Ascending aorta (tissue), 2 donors: ENCODE measurements at regions of chr6 and their contacts with region 1.

Region 1: DNA sequence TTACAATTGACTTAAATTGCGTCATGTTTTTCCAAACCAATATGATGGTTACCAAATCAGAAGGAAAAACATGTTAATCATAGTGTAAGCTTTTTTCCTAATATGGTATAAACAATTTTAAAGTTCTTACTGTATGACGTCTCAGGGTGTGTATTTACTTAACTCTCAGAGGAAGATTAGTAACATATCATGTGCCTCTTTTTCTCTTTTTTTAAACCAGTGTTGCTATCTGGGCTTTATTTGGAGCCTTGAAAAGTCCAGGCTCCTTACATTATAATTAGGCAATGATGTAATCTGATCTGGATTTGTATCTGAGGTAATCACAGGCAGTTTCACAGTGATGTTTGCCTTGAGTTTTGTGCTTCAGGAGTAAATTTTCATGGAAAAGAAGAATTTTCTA is 20.4 kb upstream of the RAB23 start:
- DNase-seq: no peak
- H3K4me3 ChIP-seq: no peak overlapping the region
- H3K27ac ChIP-seq: peak overlapping the region; percentile 80 to 81
- H3K4me1 ChIP-seq: peaks cover 3 to 8% of the 10 kb centered on the region in 2 donors
- H3K27me3 ChIP-seq: no peaks in the 10 kb centered on the region
- CTCF ChIP-seq: no peak

Region 2: DNA sequence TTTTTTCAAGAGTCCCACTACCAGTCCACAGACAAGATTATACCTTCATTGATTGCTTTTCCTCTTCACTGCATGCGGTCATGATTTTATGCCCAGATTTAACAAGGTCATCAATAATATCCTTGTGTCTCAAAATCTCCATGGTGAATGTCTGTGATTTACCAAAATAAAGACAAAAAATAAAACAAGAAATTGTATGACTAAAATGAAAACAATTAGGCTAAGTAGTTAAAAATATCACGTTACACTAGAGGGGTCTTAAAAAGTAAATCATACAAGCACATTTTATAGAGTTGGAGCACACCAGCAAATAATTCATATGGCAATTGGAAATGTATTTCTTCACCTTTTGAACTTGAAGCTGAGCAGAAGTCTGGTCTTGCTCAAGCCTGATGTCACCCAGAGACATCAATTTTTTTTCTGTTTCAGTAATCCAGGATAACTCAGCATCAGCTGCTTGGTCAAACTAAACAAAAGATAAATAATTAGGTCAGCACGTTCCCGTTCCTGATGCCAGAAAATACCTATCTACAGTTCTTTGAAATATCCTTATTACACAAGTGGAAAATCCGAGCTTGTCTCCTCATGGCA is 725.3 kb before region 1 on chr6:
- intact Hi-C with region 1: no loop called
- DNase-seq: no peak
- H3K4me3 ChIP-seq: no peak overlapping the region
- H3K27ac ChIP-seq: peak overlapping the region; percentile 29 to 43
- H3K4me1 ChIP-seq: peaks cover 5 to 42% of the 10 kb centered on the region in 2 donors
- H3K27me3 ChIP-seq: no peaks in the 10 kb centered on the region
- CTCF ChIP-seq: no peak

Region 3: DNA sequence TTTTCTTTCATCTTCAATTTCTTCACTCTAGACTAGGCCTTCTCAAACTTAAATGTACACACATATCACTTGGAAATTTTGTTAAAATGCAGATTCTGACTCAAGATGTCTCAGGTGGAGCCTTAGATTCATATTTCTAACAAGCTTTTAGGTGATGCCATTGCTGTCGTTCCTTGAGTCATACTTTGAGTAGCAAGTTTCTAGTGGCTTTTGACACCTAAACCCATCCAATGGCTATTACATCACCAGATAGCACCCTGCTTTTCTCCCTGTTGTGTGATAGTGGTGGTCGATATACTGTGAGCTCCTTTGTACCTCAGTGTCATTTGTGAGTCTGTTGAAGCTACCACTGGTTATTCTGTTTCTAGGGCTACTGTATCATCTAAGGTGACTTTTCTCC is 105.2 kb before region 1 on chr6:
- intact Hi-C with region 1: no loop called
- DNase-seq: no peak
- H3K4me3 ChIP-seq: no peak overlapping the region
- H3K27ac ChIP-seq: no peak overlapping the region
- H3K4me1 ChIP-seq: no peaks in the 10 kb centered on the region
- H3K27me3 ChIP-seq: no peaks in the 10 kb centered on the region
- CTCF ChIP-seq: no peak

Region 4: DNA sequence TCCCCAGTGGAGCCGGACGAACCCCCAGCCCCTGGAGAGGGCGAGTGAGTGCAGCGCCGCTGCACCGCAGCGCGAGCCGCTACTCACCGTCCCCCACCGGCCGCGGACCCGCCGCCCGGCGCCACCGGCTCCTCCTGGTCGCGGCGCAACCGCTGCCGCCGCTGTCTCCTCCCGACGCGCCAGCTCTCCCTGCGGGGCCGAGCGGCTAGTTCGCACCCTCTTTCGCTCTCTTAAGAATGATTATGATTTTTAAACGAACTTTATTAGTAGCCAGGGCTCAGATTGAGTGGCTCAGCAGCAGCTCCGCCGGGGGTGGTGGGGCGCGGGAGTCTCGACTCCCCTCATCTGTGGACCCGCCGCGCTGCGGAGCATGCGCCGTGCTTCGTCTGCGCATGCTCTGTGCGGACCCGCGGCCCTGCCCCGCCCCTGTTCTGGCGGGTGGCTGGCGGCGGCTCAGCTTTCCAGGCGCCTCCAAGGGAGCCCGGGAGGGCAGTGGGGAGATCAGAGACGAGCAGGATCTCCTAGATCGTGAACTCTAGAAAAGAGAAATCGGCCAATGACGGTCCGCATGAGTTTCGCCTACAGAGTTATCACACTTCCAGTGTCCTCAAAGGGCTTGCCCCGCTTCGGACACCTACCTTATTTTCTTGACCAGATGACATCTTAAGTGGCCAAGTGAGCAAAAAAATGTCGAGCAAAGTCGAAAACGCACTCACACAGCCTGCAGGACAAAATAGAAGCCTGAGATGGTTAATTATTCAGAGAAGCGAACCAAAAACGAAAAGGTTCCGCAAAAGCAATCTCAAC is 20.4 kb before region 1 on chr6 and contains the start of gene RAB23:
- intact Hi-C with region 1: loop called (anchors 1 kb)
- DNase-seq: peak; percentile 16 to 89
- H3K4me3 ChIP-seq: peak within 1 kb of the TSS; percentile 72 to 88
- H3K27ac ChIP-seq: peak within 1 kb of the TSS; percentile 93 to 96
- H3K4me1 ChIP-seq: peaks cover 0 to 6% of the 10 kb centered on the region in 2 donors
- H3K27me3 ChIP-seq: no peaks in the 10 kb centered on the region
- CTCF ChIP-seq: no peak
- total RNA-seq, gene RAB23: 19.9 TPM

Region 5: GRCh38 chr6:57257911-57258541 is 15.5 kb after region 1 on chr6:
- intact Hi-C with region 1: loop called (anchors 2 kb)
- DNase-seq: no peak
- H3K4me3 ChIP-seq: peak overlapping the region in 1 of 2 donors; percentile 51
- H3K27ac ChIP-seq: peak overlapping the region; percentile 89 to 95
- H3K4me1 ChIP-seq: peaks cover 11 to 43% of the 10 kb centered on the region in 2 donors
- H3K27me3 ChIP-seq: no peaks in the 10 kb centered on the region
- CTCF ChIP-seq: no peak